Heart right ventricle (tissue), 16 donors: ENCODE measurements at regions of chr9 and their contacts with region 1.

Region 1: DNA sequence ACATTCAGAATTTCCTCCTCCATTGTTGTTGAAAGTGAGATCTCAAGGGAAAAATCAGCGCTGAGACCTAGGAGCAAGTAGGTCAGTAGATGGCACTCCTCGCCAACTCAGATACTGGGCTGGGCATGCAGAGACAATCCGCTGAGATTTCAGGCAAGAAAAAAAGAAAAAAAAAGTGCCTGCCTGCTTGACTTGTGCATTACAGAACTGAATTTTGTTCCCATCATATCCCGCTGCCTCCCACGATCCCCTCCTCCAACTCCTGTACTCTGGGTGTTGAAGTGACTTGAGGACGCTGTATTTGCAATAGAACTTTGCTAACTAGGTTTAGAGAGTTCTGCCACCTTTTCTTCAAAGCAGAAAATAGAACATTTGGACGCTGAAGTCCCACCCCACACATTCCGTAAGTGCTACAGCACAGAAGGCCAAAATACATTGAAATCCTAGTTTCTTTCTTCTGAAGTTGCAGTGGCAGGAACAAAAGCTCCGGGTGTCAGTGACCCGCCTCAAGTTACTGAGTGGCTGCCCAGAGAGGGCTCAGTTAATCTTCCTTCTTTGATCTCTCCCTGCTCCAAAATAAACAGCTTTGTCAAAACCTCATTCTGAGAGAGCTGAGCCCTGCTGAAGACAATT is 265.8 kb downstream of the MLLT3 start:
- DNase-seq: peak; percentile 46 to 79
- ATAC-seq: peak; percentile 77 to 95 (median 91)
- H3K4me3 ChIP-seq: peak overlapping the region in 7 of 10 donors; percentile 0 to 42 (median 33)
- H3K27ac ChIP-seq: peak overlapping the region in 9 of 10 donors; percentile 1 to 76 (median 55)
- H3K4me1 ChIP-seq: peaks cover 0 to 38% (median 17%) of the 10 kb centered on the region in 9 donors
- H3K27me3 ChIP-seq: no peaks in the 10 kb centered on the region
- CTCF ChIP-seq: peak; percentile 55 to 87 (median 69)

Region 2: DNA sequence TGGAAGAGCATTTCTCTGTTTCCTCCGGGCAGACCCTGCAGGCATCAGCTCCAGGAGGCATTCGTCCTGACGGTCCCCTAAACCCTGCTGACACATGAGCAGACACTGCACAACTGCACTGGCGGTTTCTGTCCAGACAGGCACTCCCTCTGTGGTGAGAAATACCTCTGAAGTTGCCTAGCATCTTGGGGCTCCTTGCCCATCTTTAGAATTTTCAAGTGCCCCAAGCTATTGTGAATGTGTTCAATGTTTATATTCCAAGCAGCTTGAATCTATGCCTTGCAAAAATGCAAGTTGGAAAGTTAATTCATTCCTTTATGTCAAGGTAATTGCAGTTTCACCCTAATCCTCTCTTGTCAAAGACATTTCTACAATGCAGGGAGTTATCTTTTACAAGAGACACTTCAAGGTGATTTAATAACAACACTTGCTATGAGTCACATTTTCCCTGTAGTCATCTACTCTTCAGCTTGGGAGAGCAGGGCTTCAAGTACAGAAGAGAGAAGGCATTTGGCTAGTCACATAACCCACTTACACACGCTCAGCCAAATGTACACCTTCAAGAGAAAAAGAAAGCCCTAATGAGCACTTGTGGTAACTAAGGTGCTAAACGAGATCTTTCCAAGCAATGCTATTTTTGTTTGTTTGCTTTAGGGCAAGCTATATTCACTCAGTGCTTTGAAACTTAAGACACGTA is 36.7 kb before region 1 on chr9:
- intact Hi-C with region 1: no loop called
- DNase-seq: no peak
- ATAC-seq: peak in 1 of 8 donors; percentile 81
- H3K4me3 ChIP-seq: no peak overlapping the region
- H3K27ac ChIP-seq: no peak overlapping the region
- H3K4me1 ChIP-seq: peaks cover 0 to 11% (median 4%) of the 10 kb centered on the region in 9 donors
- H3K27me3 ChIP-seq: no peaks in the 10 kb centered on the region
- CTCF ChIP-seq: no peak

Region 3: DNA sequence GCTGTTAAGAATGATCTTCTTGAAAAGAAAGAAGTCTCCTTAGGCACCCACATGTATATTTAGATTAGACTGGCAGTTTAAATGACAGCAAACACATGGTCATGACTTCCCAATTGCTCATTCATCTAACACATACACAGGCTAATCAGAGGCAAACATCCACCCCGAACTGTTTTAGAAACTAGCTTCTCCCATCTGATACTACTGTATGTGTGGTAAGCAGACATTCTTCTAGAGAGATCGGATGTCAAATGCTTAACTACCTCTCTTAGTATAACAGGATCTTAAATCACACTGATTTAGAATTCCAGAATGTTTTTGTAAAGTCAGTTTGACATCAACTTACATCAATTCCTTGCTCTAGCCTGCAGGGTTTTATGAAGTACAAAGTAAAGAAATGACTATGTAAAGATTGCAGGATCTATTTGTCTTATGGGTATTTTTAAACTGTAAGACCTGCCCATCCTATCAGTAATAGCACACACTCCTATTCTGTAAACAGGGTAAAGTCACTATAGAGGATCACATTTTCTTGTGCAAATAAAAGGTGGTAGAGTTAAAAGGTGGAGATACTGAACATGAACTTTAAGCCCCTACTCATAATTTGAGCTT is 26.0 kb after region 1 on chr9:
- intact Hi-C with region 1: no loop called
- DNase-seq: no peak
- ATAC-seq: no peak
- H3K4me3 ChIP-seq: no peak overlapping the region
- H3K27ac ChIP-seq: no peak overlapping the region
- H3K4me1 ChIP-seq: peaks cover 0 to 22% (median 4%) of the 10 kb centered on the region in 9 donors
- H3K27me3 ChIP-seq: no peaks in the 10 kb centered on the region
- CTCF ChIP-seq: no peak

Region 4: GRCh38 chr9:20684035-20684872 is 327.7 kb after region 1 on chr9 and contains the start of gene FOCAD:
- intact Hi-C with region 1: loop called in 1 of 10 experiments (anchors 10 kb)
- DNase-seq: peak; percentile 94 to 97
- ATAC-seq: peak; percentile 98 to 100 (median 99)
- H3K4me3 ChIP-seq: peak within 1 kb of the TSS; percentile 77 to 99 (median 90)
- H3K27ac ChIP-seq: peak within 1 kb of the TSS; percentile 89 to 99 (median 96)
- H3K4me1 ChIP-seq: peaks cover 3 to 56% (median 28%) of the 10 kb centered on the region in 9 donors
- H3K27me3 ChIP-seq: no peaks in the 10 kb centered on the region
- CTCF ChIP-seq: peak in 2 of 9 donors; percentile 8 to 19
- total RNA-seq, gene FOCAD: 25.6 to 41.3 (median 33.3) TPM